Dorsolateral prefrontal cortex (tissue), 120 donors: ENCODE measurements at regions of chr19 and their contacts with region 1.

Region 1: DNA sequence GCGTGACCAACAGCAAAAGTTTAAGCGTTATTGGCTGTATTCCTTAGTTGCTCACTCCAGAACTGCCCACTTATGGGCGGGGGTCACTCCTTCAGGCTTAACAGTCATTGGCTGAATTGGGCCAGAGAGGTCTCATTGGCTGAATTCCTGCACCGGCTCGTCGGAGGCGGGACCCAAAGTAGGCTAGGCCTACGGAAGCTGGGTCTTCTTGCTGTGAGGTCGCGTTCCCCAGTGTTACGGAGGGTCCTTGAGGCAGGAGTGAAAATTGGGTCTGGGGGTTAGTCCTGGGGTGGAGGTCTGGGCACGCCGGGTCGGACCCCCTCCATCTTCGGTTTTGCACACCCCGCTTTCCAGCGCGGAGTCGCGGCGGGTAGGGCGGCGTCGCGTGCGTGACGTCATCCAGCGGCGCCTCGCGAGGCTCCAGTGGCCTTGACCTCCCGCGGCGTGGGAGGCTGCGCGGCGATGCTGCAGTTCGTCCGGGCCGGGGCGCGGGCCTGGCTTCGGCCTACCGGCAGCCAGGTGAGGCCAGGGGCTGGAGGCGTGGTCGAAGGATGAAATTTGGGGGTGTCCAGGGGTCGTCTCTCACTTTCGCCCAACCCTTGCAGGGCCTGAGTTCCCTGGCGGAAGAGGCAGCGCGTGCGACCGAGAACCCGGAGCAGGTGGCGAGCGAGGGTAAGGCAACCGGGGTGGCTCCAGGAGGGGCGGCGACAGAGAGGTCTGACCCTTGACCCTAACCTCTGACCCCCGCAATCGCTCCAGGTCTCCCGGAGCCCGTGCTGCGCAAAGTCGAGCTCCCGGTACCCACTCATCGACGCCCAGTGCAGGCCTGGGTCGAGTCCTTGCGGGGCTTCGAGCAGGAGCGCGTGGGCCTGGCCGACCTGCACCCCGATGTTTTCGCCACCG is at the start of gene MRPL4:
- DNase-seq: peak; percentile 84 to 98 (median 96)
- H3K4me3 ChIP-seq: peak within 1 kb of the TSS; percentile 73 to 99 (median 93)
- H3K27ac ChIP-seq: peak within 1 kb of the TSS in 57 of 59 donors; percentile 1 to 95 (median 84)
- H3K27me3 ChIP-seq: no peaks in the 10 kb centered on the region
- CTCF ChIP-seq: peak in 18 of 56 donors; percentile 7 to 58 (median 27)
- total RNA-seq, gene MRPL4: 35.7 to 68.1 (median 53.5) TPM

Region 2: GRCh38 chr19:10052602-10053360 is 199.3 kb before region 1 on chr19:
- intact Hi-C with region 1: no loop called
- DNase-seq: no peak
- H3K4me3 ChIP-seq: no peak overlapping the region
- H3K27ac ChIP-seq: no peak overlapping the region
- H3K27me3 ChIP-seq: peaks cover 0 to 1% (median 0%) of the 10 kb centered on the region in 45 donors
- CTCF ChIP-seq: no peak

Region 3: DNA sequence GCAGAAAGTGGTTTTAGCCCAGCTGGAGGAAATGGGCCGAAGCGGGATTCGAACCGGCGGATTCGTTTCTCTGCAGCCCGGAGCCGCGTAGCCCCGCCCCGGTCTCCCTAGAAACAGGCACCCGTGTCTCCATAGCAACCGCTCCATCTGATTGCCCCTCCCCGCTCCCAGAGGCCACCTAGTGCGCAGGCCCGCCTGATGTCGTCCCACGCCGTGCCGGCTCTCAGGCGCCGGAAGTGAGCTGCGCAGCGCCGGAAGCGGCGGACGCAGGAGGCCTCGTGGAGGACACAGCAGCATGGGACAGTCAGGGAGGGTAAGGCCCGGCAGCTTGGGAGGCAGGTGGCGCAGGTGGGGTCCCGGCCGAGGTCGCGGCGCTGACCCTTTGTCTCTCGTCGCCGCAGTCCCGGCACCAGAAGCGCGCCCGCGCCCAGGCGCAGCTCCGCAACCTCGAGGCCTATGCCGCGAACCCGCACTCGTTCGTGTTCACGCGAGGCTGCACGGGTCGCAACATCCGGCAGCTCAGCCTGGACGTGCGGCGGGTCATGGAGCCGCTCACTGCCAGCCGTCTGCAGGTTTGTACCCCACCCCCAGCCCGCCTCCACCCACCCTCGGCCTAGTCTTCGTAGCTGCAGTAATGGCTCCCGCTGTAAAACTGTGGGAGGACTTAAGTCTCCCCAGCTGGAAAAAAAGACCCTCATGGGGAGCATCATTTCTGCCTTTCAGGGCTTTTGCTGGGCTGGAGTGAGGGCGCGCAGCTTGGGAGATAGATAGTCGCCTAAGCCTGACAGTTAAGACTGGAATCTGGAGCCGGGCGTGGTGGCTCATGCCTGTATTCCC is 145.7 kb before region 1 on chr19 and contains the start of gene PPAN:
- intact Hi-C with region 1: loop called (anchors 5 kb)
- DNase-seq: peak; percentile 96 to 99 (median 98)
- H3K4me3 ChIP-seq: peak within 1 kb of the TSS; percentile 66 to 99 (median 89)
- H3K27ac ChIP-seq: peak within 1 kb of the TSS in 51 of 59 donors; percentile 9 to 92 (median 75)
- H3K27me3 ChIP-seq: no peaks in the 10 kb centered on the region
- CTCF ChIP-seq: peak in 44 of 56 donors; percentile 8 to 66 (median 40)
- total RNA-seq, gene PPAN: 32.9 to 65.3 (median 43.5) TPM

Region 4: GRCh38 chr19:10120538-10121189 is 131.4 kb before region 1 on chr19:
- intact Hi-C with region 1: loop called (anchors 1 to 5 kb)
- DNase-seq: no peak
- H3K4me3 ChIP-seq: peak overlapping the region in 17 of 59 donors; percentile 1 to 99 (median 90)
- H3K27ac ChIP-seq: peak overlapping the region in 2 of 59 donors; percentile 2 to 18
- H3K27me3 ChIP-seq: no peaks in the 10 kb centered on the region
- CTCF ChIP-seq: no peak

Region 5: DNA sequence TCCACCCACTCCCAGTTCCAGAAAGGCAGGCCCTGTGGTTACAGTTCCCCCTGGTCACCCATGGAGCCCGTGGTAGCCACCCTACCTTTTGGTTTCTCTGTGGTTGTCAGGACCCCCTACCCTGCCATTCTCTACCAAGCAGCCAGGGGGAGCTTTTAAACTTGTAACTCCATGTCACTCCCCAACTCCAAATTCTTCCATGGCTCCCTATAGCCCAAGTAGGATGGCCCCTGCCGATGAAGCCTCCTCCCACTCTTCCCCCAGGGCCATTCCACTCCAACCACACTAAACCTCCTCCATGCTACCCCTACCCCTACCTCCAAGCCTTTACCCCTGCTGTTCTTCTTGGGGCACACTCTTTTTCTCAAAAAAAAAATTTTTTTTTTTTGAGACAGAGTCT is 23.1 kb before region 1 on chr19:
- intact Hi-C with region 1: loop called (anchors 2 kb)
- DNase-seq: no peak
- H3K4me3 ChIP-seq: no peak overlapping the region
- H3K27ac ChIP-seq: peak overlapping the region in 22 of 59 donors; percentile 3 to 97 (median 58)
- H3K27me3 ChIP-seq: no peaks in the 10 kb centered on the region
- CTCF ChIP-seq: peak in 54 of 56 donors; percentile 27 to 68 (median 50)

Region 6: GRCh38 chr19:10292206-10292788 is 40.3 kb after region 1 on chr19:
- intact Hi-C with region 1: no loop called
- DNase-seq: peak in 7 of 10 donors; percentile 44 to 86 (median 70)
- H3K4me3 ChIP-seq: peak overlapping the region in 57 of 59 donors; percentile 21 to 72 (median 56)
- H3K27ac ChIP-seq: no peak overlapping the region
- H3K27me3 ChIP-seq: peaks cover 0 to 98% (median 83%) of the 10 kb centered on the region in 45 donors
- CTCF ChIP-seq: no peak

Region 7: DNA sequence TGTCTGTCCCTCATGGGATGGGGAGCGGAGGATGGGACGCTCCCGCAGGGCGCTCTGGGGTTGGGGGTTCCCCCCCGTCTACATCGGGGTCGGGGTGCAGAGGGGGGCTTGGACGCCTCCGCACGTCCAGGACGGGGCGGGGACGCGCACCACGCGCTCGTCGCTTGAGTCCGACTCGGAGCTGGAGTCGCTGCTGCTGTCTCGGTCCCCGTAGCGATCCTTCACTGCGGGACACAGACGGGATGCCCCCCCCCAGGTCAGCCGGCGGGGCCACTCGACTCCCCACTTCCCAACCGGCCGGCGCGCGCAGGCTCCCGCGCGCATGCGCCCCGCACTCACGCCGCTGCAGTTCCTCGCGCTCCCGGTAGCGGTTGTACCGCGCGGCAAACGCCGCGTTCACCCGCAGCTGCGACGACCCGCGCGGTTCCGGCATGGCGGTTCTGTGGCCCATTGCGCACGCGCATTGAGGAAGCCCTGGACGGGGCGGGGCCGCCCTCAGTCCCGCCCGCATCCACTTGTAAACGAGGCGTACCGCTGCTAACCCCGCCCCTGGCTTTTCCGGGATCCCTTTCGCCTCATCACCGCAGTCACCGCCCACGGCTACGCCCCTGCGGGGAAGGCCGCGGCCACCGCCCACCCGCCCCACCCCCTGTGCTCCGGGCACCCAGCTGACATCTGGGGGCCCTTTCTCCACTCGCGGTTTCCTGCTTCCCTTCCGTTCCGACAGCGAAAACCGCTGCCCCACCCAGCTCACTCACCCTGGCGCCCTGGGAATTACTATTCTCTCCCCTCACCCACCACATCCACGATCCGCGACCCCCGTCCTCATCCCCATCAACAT is 313.7 kb after region 1 on chr19 and contains the start of gene KRI1:
- intact Hi-C with region 1: loop called in 1 of 2 experiments (anchors 10 kb)
- DNase-seq: peak; percentile 95 to 98 (median 97)
- H3K4me3 ChIP-seq: peak within 1 kb of the TSS; percentile 57 to 98 (median 82)
- H3K27ac ChIP-seq: peak within 1 kb of the TSS; percentile 51 to 97 (median 89)
- H3K27me3 ChIP-seq: no peaks in the 10 kb centered on the region
- CTCF ChIP-seq: peak in 47 of 56 donors; percentile 11 to 69 (median 42)
- total RNA-seq, gene KRI1: 11.3 to 32.1 (median 19.2) TPM